Uterus (tissue), 4 donors: ENCODE measurements at regions of chr12 and their contacts with region 1.

Region 1: DNA sequence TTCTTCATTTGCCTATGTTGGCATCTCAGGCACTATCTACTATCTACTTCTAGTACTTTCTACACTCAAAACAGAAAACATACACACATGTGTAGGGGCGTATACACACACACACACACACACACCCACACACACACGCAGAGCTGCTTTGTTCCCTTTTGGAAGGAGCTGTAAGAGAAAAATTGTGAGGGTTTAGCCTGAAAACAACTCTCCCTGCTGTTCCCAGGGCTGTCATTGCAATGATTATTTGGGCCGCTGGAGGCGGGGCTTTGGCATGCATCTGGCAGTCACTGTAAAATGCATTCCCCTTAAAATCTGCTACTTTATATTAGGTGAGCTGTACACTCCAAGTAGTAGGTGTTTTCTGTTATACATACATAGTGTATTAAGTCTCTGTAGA is 29.1 kb upstream of the SLC38A2 start:
- DNase-seq: peak; percentile 71 to 73
- H3K4me3 ChIP-seq: no peak overlapping the region
- H3K27ac ChIP-seq: peak overlapping the region; percentile 83 to 97
- H3K4me1 ChIP-seq: peaks cover 14 to 23% of the 10 kb centered on the region in 2 donors
- H3K27me3 ChIP-seq: no peaks in the 10 kb centered on the region
- CTCF ChIP-seq: peak; percentile 12 to 47 (median 22)
- POLR2A ChIP-seq: no peak

Region 2: GRCh38 chr12:46450279-46450748 is 48.7 kb after region 1 on chr12:
- intact Hi-C with region 1: loop called (anchors 10 kb)
- DNase-seq: peak; percentile 70 to 78
- H3K4me3 ChIP-seq: no peak overlapping the region
- H3K27ac ChIP-seq: peak overlapping the region; percentile 66 to 81
- H3K4me1 ChIP-seq: peaks cover 2 to 5% of the 10 kb centered on the region in 2 donors
- H3K27me3 ChIP-seq: no peaks in the 10 kb centered on the region
- CTCF ChIP-seq: no peak
- POLR2A ChIP-seq: no peak

Region 3: DNA sequence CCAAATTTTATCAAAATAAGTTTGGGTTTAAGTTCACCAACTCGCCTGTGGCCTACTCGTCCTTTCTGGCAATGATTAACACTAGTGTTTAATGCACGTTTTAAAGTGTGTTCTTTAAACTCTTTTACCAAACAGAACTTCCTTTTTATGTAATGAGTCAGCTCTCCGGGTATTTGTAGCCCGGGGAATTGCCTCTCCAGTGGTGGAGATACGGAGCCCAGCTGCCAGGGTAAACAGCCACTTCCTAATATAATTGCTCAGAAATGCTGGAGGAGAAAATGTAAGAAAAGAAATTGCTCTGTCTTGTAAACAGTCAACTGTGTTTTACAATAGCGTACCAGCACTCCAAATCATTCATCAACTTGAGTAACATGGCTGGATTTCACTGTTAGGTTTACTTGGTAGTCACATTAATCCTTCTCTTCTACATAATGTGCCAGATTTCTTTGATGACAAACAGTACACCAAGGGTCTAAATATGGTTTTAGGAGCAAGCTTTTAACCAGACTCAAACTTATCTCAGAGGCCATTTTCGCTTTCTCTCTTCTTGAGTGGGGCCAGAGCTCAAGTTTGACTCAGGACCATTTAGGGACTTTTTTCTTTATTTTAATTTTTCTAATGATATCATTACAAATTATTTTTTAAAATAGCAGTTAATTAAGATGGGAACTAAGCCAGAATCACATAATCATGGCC is 72.1 kb after region 1 on chr12:
- intact Hi-C with region 1: no loop called
- DNase-seq: peak; percentile 50 to 72
- H3K4me3 ChIP-seq: no peak overlapping the region
- H3K27ac ChIP-seq: peak overlapping the region; percentile 78 to 94
- H3K4me1 ChIP-seq: peaks cover 5 to 9% of the 10 kb centered on the region in 2 donors
- H3K27me3 ChIP-seq: no peaks in the 10 kb centered on the region
- CTCF ChIP-seq: no peak
- POLR2A ChIP-seq: peak in 1 of 2 donors; percentile 4

Region 4: DNA sequence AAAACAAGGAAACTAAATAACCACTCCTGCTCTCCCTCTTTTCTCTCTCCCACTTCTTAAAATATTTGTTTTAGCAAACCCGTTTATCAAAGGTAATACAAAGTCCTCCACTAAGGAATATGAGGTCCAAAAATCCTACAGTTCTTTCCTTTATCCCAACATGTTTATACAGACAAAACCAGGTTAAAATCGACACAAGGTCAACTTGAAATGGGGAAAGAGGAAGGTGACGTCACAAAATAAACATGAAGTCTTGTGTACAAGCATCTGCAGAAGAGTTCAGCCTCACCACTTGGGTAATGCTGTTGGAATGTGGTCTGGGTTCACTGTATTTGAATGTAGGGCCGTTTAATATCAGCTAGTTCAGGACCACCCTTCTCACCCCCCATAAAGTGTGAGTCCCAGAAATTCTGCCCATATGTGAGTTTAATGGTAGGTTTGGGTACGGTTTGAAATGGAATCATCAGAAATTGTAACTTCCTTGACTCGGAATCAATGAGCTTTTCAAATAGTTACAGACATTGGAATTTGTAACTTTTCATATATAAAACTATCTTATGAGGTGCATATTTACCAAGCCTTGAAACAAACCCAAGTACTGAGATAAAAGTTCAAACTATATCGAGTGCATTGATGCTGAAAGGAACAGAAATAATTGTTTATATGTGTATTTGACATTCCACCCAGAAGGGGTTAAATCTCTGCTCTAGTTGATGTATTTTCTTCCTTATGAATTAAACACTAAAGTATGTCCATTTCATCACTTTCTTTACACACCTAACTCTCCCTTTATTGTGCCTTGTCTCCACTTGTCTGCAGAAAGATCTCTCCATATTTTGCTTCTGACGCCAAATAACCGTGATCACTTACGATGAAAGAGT is 91.0 kb after region 1 on chr12:
- intact Hi-C with region 1: no loop called
- DNase-seq: no peak
- H3K4me3 ChIP-seq: no peak overlapping the region
- H3K27ac ChIP-seq: peak overlapping the region in 1 of 2 donors; percentile 67
- H3K4me1 ChIP-seq: no peaks in the 10 kb centered on the region
- H3K27me3 ChIP-seq: no peaks in the 10 kb centered on the region
- CTCF ChIP-seq: no peak
- POLR2A ChIP-seq: no peak